ENCODE measurements at regions of chr18 and their contacts with region 1.

Region 1: DNA sequence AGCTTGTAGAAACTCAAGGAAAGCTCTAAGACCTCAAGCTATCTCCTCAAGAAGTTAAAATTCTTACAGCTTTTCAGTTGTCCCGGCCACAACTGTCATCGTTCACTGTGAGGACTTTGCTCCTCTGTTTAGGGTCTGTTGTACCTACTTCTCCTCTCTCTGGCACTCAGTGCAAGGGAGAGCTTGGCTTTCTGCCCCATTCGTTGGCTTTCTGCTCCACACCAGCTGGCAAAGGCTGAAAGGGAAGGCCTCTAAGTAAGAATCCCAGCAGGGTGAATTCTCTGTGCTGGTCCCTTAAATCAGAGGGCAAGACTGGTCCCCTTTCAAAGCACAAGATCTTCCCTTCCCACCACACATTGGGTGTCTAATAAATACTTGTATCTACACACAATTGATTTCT is 17.3 kb downstream of the ZBTB7C start:
- DNase-seq: no peak
- H3K4me3 ChIP-seq: no peak overlapping the region
- H3K27ac ChIP-seq: no peak overlapping the region
- H3K4me1 ChIP-seq: peaks cover 28% of the 10 kb centered on the region
- H3K27me3 ChIP-seq: no peaks in the 10 kb centered on the region
- CTCF ChIP-seq: no peak

Region 2: GRCh38 chr18:48330403-48331022 is 61.4 kb before region 1 on chr18:
- dilution Hi-C with region 1: loop called (anchors 10 kb)
- DNase-seq: peak; percentile 59
- H3K4me3 ChIP-seq: peak overlapping the region in 1 of 3 experiments; percentile 7
- H3K27ac ChIP-seq: peak overlapping the region; percentile 85
- H3K4me1 ChIP-seq: peaks cover 41% of the 10 kb centered on the region
- H3K27me3 ChIP-seq: no peaks in the 10 kb centered on the region
- CTCF ChIP-seq: no peak